ENCODE measurements at regions of chr19 and their contacts with region 1.

Region 1: DNA sequence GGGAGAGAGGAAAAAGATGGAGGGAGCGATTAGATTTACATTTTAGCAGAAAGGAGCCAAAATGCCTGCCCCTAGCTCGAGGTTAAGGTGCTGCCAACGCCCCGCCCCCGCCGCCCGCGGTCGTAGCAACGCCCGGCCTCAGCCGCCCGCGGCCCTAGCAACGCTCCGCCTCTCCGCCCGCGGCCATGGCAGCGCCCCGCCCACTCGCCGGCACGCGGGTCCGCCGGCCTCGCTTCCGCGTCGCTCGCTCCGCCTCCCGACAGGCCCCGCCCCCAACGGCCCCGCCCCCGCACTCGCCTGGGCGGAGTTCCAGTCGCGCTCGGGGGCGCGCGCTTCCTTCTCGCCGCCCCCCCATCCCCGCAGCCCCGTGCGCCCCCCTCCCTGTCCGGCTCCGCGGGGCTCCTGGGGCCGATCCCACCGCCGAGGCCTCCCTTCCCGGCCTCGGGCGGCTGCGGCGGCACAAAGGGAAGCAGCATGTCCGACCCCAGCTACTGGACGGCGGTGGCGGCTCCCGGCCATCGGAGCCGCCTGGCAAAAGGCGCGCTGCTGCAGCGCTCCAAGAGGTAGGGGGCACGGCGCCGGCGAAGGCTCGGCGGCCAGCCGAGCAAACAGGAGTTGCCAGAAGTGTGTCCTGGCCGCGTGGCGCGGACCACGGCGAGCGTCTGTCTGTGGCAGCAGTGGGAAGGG is 20.3 kb downstream of the MAST3 start:
- DNase-seq: peak; percentile 94
- ATAC-seq: peak; percentile 90
- H3K4me3 Mint-ChIP-seq: peak overlapping the region; percentile 77
- H3K27ac Mint-ChIP-seq: peak overlapping the region; percentile 86
- H3K4me1 Mint-ChIP-seq: peaks cover 32% of the 10 kb centered on the region
- H3K27me3 Mint-ChIP-seq: no peaks in the 10 kb centered on the region
- CTCF ChIP-seq: no peak

Region 2: GRCh38 chr19:18091217-18091608 is 26.6 kb before region 1 on chr19:
- CTCF ChIA-PET with region 1: interaction called, 10 read pairs
- POLR2A ChIA-PET with region 1: interaction called, 3 read pairs
- intact Hi-C with region 1: no loop called
- DNase-seq: peak; percentile 96
- ATAC-seq: peak; percentile 67
- H3K4me3 Mint-ChIP-seq: peak overlapping the region; percentile 46
- H3K27ac Mint-ChIP-seq: peak overlapping the region; percentile 94
- H3K4me1 Mint-ChIP-seq: peaks cover 58% of the 10 kb centered on the region
- H3K27me3 Mint-ChIP-seq: no peaks in the 10 kb centered on the region
- CTCF ChIP-seq: no peak

Region 3: DNA sequence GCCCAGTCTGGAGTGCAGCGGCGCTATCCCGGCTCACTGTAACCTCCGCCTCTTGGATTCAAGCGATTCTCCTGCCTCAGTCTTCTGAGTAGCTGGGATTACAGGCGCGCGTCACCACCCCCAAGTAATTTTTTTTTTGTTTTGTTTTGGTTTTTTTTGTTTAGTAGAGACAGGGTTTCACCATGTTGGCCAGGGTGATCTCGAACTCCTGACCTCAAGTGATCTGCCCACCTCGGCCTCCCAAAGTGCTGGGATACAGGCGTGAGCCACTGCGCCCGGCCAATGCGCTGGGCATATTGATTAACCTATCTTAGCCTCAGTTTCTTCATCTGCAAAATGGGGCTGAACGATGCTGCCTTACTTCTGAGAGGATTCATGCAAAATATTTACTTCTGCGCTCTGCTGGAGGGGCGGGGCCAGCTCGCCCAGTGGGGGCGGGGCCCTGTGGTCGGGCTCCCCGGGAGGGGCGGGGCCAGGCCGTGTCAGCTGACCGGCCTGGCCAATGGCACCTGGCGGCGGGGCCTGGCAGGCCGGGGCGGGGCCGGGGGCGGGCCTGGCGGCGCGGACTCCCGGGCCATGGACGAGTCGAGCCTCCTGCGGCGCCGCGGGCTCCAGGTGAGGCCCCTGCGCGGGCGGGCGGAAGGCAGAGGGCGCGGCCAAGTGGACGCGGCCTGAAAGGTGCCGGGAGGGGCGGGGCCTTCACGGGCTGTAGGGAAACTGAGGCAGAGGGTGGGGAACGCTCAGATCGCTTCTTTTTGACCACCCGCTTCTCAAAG is 20.4 kb before region 1 on chr19 and contains the start of gene MAST3:
- CTCF ChIA-PET with region 1: interaction called, 16 read pairs
- POLR2A ChIA-PET with region 1: interaction called, 3 read pairs
- intact Hi-C with region 1: no loop called
- DNase-seq: peak; percentile 94
- ATAC-seq: peak; percentile 96
- H3K4me3 Mint-ChIP-seq: peak within 1 kb of the TSS; percentile 86
- H3K27ac Mint-ChIP-seq: peak within 1 kb of the TSS; percentile 56
- H3K4me1 Mint-ChIP-seq: peaks cover 25% of the 10 kb centered on the region
- H3K27me3 Mint-ChIP-seq: no peaks in the 10 kb centered on the region
- CTCF ChIP-seq: no peak
- total RNA-seq, gene MAST3: 23.1 to 23.3 TPM

Region 4: GRCh38 chr19:18160971-18161635 is 43.3 kb after region 1 on chr19:
- CTCF ChIA-PET with region 1: interaction called, 15 read pairs
- POLR2A ChIA-PET with region 1: interaction called, 8 read pairs
- intact Hi-C with region 1: loop called (anchors 5 kb)
- DNase-seq: peak; percentile 74
- ATAC-seq: peak; percentile 96
- H3K4me3 Mint-ChIP-seq: peak overlapping the region; percentile 59
- H3K27ac Mint-ChIP-seq: peak overlapping the region; percentile 9
- H3K4me1 Mint-ChIP-seq: peaks cover 11% of the 10 kb centered on the region
- H3K27me3 Mint-ChIP-seq: no peaks in the 10 kb centered on the region
- CTCF ChIP-seq: peak; percentile 59

Region 5: DNA sequence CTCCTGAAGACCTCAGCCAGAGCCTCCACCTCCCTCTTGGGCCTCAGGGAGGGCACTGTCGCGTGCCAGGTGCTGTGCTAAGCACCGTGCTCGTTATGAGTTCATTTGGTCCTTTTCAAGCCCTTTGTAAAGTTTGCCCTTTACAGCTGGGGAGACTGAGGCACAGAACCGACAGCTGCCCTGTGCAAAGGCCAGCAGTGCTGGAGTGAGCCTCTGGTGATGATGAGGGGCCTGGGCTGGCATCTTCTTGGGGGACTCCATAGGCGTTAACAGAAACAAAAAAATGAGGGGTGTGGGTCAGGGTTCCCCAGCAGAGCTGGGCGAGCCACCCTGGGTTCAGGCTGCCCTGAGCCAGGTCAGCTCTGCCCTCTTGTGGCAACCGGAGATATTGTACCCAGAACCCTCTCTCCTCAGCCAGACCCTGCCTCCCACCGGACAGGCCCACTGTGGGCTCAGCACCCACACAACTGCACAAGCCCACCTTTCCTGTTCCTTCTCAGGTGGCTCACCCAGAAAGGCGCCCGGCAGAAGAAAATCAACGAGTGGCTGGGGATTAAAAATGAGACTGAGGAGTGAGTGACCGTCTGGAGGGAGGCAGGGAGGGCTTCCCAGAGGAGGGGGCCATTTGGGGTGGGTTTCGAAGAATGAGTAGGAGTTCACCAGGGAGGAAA is 50.3 kb after region 1 on chr19:
- CTCF ChIA-PET with region 1: interaction called, 13 read pairs
- POLR2A ChIA-PET with region 1: no interaction called
- intact Hi-C with region 1: loop called (anchors 5 kb)
- DNase-seq: peak; percentile 76
- ATAC-seq: peak; percentile 99
- H3K4me3 Mint-ChIP-seq: no peak overlapping the region
- H3K27ac Mint-ChIP-seq: no peak overlapping the region
- H3K4me1 Mint-ChIP-seq: peaks cover 4% of the 10 kb centered on the region
- H3K27me3 Mint-ChIP-seq: no peaks in the 10 kb centered on the region
- CTCF ChIP-seq: peak; percentile 88

Region 6: DNA sequence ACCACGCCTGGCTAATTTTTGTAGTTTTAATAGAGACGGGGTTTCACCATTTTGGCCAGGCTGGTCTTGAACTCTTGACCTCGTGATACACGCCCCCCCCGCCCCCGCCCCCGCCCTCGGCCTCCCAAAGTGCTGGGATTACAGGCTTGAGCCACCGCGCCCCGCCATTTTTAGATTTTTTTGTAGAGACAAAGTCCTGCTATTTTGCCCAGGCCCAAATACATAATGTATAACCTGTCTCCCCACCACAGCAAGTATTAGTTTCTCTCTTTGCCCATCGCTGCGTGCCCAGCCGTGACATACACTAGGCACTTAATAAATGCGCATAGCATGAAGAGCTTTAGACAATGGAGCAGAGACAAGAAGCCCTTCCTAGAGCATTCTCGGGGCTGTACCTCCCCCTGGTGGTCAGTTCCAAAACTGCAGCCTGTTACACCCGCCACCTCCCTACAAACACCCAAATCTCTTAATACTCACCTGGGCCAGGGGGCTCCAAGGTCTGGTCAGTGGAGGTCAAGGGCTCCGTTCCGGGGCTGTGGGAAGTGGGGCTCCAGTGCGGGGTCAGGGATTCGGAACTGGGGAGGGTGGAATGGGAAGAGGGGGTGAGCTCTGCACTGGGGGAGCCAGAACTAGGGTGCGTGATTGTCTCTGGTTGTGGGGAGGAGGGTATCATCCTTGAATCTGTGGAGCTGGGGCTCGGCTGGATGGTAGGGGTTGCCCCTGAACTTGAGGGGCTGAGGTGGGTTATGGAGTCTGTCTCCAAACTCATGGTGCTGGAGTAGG is 133.9 kb after region 1 on chr19:
- CTCF ChIA-PET with region 1: no interaction called
- POLR2A ChIA-PET with region 1: no interaction called
- intact Hi-C with region 1: no loop called
- DNase-seq: peak; percentile 91
- ATAC-seq: peak; percentile 95
- H3K4me3 Mint-ChIP-seq: no peak overlapping the region
- H3K27ac Mint-ChIP-seq: no peak overlapping the region
- H3K4me1 Mint-ChIP-seq: peaks cover 2% of the 10 kb centered on the region
- H3K27me3 Mint-ChIP-seq: peaks cover 21% of the 10 kb centered on the region
- CTCF ChIP-seq: peak; percentile 90

Region 7: GRCh38 chr19:18401580-18402112 is 283.8 kb after region 1 on chr19:
- CTCF ChIA-PET with region 1: no interaction called
- POLR2A ChIA-PET with region 1: no interaction called
- intact Hi-C with region 1: no loop called
- DNase-seq: peak; percentile 21
- ATAC-seq: peak; percentile 42
- H3K4me3 Mint-ChIP-seq: no peak overlapping the region
- H3K27ac Mint-ChIP-seq: no peak overlapping the region
- H3K4me1 Mint-ChIP-seq: no peaks in the 10 kb centered on the region
- H3K27me3 Mint-ChIP-seq: peaks cover 8% of the 10 kb centered on the region
- CTCF ChIP-seq: no peak